Transverse colon (tissue), 4 donors: ENCODE measurements at regions of chr12 and their contacts with region 1.

Region 1: GRCh38 chr12:83015390-83016217 is 328.9 kb downstream of the TMTC2 start:
- DNase-seq: no peak
- H3K4me3 ChIP-seq: peak overlapping the region in 2 of 4 donors; percentile 11 to 15
- H3K27ac ChIP-seq: peak overlapping the region; percentile 64 to 76 (median 70)
- H3K4me1 ChIP-seq: peaks cover 0 to 13% (median 3%) of the 10 kb centered on the region in 4 donors
- H3K27me3 ChIP-seq: no peaks in the 10 kb centered on the region
- CTCF ChIP-seq: no peak
- EP300 ChIP-seq: no peak
- POLR2A ChIP-seq: no peak

Region 2: GRCh38 chr12:82981162-82981561 is 34.4 kb before region 1 on chr12:
- in situ Hi-C with region 1: no loop called
- intact Hi-C with region 1: loop called (anchors 2 kb)
- DNase-seq: no peak
- H3K4me3 ChIP-seq: no peak overlapping the region
- H3K27ac ChIP-seq: no peak overlapping the region
- H3K4me1 ChIP-seq: no peaks in the 10 kb centered on the region
- H3K27me3 ChIP-seq: no peaks in the 10 kb centered on the region
- CTCF ChIP-seq: no peak
- EP300 ChIP-seq: no peak
- POLR2A ChIP-seq: no peak